HEK293T (cell line): ENCODE measurements at regions of chr14 and their contacts with region 1.

Region 1: GRCh38 chr14:32560209-32560857 is 231.2 kb downstream of the AKAP6 start:
- DNase-seq: peak; percentile 71

Region 2: DNA sequence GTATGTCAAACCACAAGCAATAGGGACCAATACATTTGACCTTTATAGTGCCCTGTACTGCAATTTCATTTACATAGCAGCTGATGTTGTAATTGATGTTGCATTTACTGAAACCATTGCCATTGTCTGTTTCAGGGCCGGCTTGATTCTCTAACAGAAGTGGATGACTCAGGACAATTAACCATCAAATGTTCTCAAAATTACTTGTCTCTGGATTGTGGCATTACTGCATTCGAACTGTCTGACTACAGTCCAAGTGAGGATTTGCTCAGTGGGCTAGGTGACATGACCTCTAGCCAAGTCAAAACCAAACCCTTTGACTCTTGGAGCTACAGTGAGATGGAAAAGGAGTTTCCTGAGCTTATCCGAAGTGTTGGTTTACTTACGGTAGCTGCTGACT is 15.2 kb before region 1 on chr14:
- CTCF ChIA-PET with region 1: interaction called, 13 read pairs
- POLR2A ChIA-PET with region 1: no interaction called
- DNase-seq: no peak